GM12878 (cell line): ENCODE measurements at regions of chr10 and their contacts with region 1.

Region 1: GRCh38 chr10:34723750-34724149 is 91.3 kb downstream of the PARD3 start:
- DNase-seq: no peak
- ATAC-seq: peak; percentile 77
- H3K4me3 ChIP-seq: no peak overlapping the region
- H3K27ac ChIP-seq: no peak overlapping the region
- H3K4me1 ChIP-seq: no peaks in the 10 kb centered on the region
- H3K27me3 ChIP-seq: no peaks in the 10 kb centered on the region
- CTCF ChIP-seq: peak; percentile 39 to 70 (median 39); a peak in 4 of 6 replicates
- EP300 ChIP-seq: no peak
- POLR2A ChIP-seq: no peak
- RAD21 ChIP-seq: peak; percentile 71

Region 2: GRCh38 chr10:34666008-34666705 is 57.6 kb before region 1 on chr10:
- CTCF ChIA-PET with region 1: interaction called, 68 read pairs
- POLR2A ChIA-PET with region 1: interaction called, 3 read pairs
- RAD21 ChIA-PET with region 1: interaction called, 33 read pairs
- SMC1A ChIA-PET with region 1: interaction called, 54 read pairs
- in situ Hi-C with region 1: no loop called
- intact Hi-C with region 1: loop called (anchors 5 kb)
- DNase-seq: peak; percentile 53
- ATAC-seq: peak; percentile 91
- H3K4me3 ChIP-seq: no peak overlapping the region
- H3K27ac ChIP-seq: no peak overlapping the region
- H3K4me1 ChIP-seq: no peaks in the 10 kb centered on the region; the same call in 1 of the 2 replicates
- H3K27me3 ChIP-seq: no peaks in the 10 kb centered on the region
- CTCF ChIP-seq: peak; percentile 55 to 72 (median 61); a peak in 5 of 6 replicates
- EP300 ChIP-seq: no peak
- POLR2A ChIP-seq: no peak
- RAD21 ChIP-seq: peak; percentile 72

Region 3: DNA sequence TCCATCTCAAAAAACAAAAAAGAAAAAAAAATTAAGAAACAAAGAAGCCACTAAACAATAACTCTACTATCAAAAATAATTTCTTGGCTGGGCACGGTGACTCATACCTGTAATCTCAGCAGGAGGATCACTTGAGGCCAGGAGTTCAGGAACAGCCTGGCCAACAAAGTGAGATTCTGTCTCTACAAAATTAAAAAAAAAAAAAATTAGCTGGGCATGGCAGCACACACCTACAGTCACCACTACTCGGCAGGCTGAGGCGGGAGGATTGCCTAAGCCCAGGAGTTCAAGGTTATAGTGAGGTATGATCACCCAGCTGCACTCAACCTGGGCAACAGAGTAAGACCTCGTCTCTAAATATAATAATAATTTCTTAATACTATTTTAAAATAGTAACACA is 22.3 kb after region 1 on chr10:
- CTCF ChIA-PET with region 1: interaction called, 54 read pairs
- POLR2A ChIA-PET with region 1: interaction called, 13 read pairs
- RAD21 ChIA-PET with region 1: interaction called, 18 read pairs
- SMC1A ChIA-PET with region 1: interaction called, 52 read pairs
- in situ Hi-C with region 1: no loop called
- intact Hi-C with region 1: no loop called
- DNase-seq: no peak
- ATAC-seq: peak; percentile 47
- H3K4me3 ChIP-seq: no peak overlapping the region
- H3K27ac ChIP-seq: no peak overlapping the region
- H3K4me1 ChIP-seq: no peaks in the 10 kb centered on the region
- H3K27me3 ChIP-seq: no peaks in the 10 kb centered on the region; a peak in 3 of 4 replicates
- CTCF ChIP-seq: no peak
- EP300 ChIP-seq: no peak
- POLR2A ChIP-seq: no peak
- RAD21 ChIP-seq: no peak

Region 4: DNA sequence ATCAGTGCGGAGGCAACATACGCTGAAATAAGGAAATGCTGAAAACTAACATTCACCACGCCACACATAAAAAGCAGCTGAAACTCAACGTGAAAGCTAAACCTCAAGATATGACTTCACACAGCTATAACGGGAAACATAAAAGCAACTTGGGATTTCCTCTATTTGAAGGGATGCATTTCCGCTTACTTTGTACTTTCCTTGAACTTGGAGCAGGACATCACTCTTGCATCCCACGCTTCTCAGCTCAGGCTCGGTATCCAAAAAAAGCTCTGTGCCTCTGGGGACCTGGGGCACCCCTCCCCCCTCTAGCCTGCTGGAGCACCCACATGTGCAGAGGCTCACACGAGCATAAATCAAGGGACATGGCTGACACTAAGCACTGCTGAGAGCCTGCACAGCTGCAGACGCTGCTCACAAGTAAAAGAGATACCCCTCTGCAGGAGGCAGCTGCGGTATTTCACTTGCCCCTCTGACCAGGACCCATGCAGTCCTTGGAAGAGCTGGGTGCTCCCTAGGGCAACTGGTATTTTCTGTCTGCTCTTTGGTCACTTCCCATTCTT is 57.1 kb after region 1 on chr10:
- CTCF ChIA-PET with region 1: interaction called, 83 read pairs
- POLR2A ChIA-PET with region 1: interaction called, 6 read pairs
- RAD21 ChIA-PET with region 1: interaction called, 50 read pairs
- SMC1A ChIA-PET with region 1: interaction called, 53 read pairs
- in situ Hi-C with region 1: no loop called
- intact Hi-C with region 1: no loop called
- DNase-seq: peak; percentile 47
- ATAC-seq: peak; percentile 88
- H3K4me3 ChIP-seq: peak overlapping the region; percentile 58
- H3K27ac ChIP-seq: peak overlapping the region; percentile 1; the same call in 1 of the 2 replicates
- H3K4me1 ChIP-seq: peaks cover 13% of the 10 kb centered on the region
- H3K27me3 ChIP-seq: no peaks in the 10 kb centered on the region
- CTCF ChIP-seq: no peak
- EP300 ChIP-seq: peak; percentile 27 to 37; a peak in 2 of 4 replicates
- POLR2A ChIP-seq: peak; percentile 44; the same call in 1 of the 2 replicates
- RAD21 ChIP-seq: no peak

Region 5: DNA sequence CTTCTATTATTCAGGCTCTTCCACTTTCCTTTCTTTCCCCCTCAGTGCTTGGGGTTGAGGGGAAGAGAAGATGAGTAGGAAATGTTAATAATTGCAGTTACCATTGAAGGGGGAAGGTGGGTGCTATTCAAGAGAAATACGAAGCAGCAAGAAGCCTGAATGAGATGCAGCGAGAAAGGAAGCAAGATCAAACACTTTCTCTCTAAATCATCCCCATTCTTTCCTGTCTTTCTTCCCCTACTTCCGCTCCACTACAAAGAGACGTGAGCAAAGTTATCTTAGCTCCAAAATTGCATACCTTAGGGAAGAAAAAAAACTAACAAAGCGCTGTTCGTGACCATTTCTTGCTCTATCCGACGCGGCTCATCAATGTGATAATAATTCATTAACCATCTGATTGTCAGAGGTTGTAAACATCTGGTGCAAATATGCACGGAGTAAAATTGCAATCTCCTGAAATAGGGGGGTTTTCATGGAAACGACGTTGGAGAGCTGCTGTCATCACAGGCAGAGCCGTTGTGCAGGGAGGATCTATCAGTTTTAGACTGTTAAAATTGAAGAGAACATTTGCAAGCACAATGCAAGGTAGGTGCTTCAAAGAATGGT is 106.6 kb after region 1 on chr10:
- CTCF ChIA-PET with region 1: interaction called, 36 read pairs
- POLR2A ChIA-PET with region 1: interaction called, 3 read pairs
- RAD21 ChIA-PET with region 1: interaction called, 31 read pairs
- SMC1A ChIA-PET with region 1: interaction called, 40 read pairs
- in situ Hi-C with region 1: no loop called
- intact Hi-C with region 1: no loop called
- DNase-seq: no peak
- ATAC-seq: no peak
- H3K4me3 ChIP-seq: no peak overlapping the region
- H3K27ac ChIP-seq: no peak overlapping the region
- H3K4me1 ChIP-seq: no peaks in the 10 kb centered on the region
- H3K27me3 ChIP-seq: no peaks in the 10 kb centered on the region
- CTCF ChIP-seq: no peak
- EP300 ChIP-seq: no peak
- POLR2A ChIP-seq: no peak
- RAD21 ChIP-seq: no peak

Region 6: GRCh38 chr10:34960983-34961382 is 237.2 kb after region 1 on chr10:
- CTCF ChIA-PET with region 1: interaction called, 23 read pairs
- POLR2A ChIA-PET with region 1: no interaction called
- RAD21 ChIA-PET with region 1: interaction called, 25 read pairs
- SMC1A ChIA-PET with region 1: interaction called, 26 read pairs
- in situ Hi-C with region 1: no loop called
- intact Hi-C with region 1: no loop called
- DNase-seq: no peak
- ATAC-seq: peak; percentile 31; the same call in 1 of the 3 replicates
- H3K4me3 ChIP-seq: no peak overlapping the region
- H3K27ac ChIP-seq: no peak overlapping the region
- H3K4me1 ChIP-seq: no peaks in the 10 kb centered on the region
- H3K27me3 ChIP-seq: no peaks in the 10 kb centered on the region; a peak in 1 of 4 replicates
- CTCF ChIP-seq: peak in 1 of 3 experiments; percentile 28; a peak in 1 of 6 replicates
- EP300 ChIP-seq: no peak
- POLR2A ChIP-seq: no peak
- RAD21 ChIP-seq: peak; percentile 36

Region 7: GRCh38 chr10:35126530-35127296 is 403.0 kb after region 1 on chr10 and contains the start of gene CREM:
- CTCF ChIA-PET with region 1: no interaction called
- POLR2A ChIA-PET with region 1: interaction called, 15 read pairs
- RAD21 ChIA-PET with region 1: no interaction called
- SMC1A ChIA-PET with region 1: interaction called, 4 read pairs
- in situ Hi-C with region 1: no loop called
- intact Hi-C with region 1: no loop called
- DNase-seq: peak; percentile 79
- ATAC-seq: peak; percentile 78
- H3K4me3 ChIP-seq: peak within 1 kb of the TSS; percentile 81
- H3K27ac ChIP-seq: peak within 1 kb of the TSS; percentile 99
- H3K4me1 ChIP-seq: peaks cover 3% of the 10 kb centered on the region; the same call in 1 of the 2 replicates
- H3K27me3 ChIP-seq: no peaks in the 10 kb centered on the region
- CTCF ChIP-seq: peak; percentile 60 to 84 (median 81)
- EP300 ChIP-seq: peak; percentile 90 to 92; a peak in 3 of 4 replicates
- POLR2A ChIP-seq: peak; percentile 97
- RAD21 ChIP-seq: peak; percentile 91
- polyA plus RNA-seq, gene CREM: 64.2 to 70.7 TPM